ENCODE measurements at regions of chr9 and their contacts with region 1.

Region 1: DNA sequence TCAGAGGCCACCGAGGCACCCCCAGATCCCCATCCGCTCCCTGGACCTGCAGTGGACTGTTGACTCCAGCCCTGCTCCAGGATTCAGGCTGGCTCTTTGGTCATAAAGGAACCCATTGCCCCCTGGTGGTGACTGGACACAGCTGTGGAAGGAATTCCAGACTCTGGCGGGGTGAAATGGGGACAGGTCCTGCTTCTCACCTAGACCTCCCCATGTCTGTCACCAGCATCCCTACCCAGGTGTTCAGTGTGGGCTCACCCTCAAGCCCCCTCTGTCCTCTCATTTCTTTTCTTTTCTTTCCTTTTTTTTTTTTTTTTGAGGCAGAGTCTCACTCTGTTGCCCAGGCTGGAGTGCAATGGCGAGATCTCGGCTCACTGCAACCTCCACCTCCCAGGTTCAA is 25.5 kb upstream of the STXBP1 start:
- DNase-seq: peak; percentile 93
- H3K4me3 ChIP-seq: no peak overlapping the region
- H3K27ac ChIP-seq: no peak overlapping the region
- H3K4me1 ChIP-seq: peaks cover 0 to 35% (median 26%) of the 10 kb centered on the region in 4 donors
- H3K27me3 ChIP-seq: no peaks in the 10 kb centered on the region
- CTCF ChIP-seq: peak; percentile 87 to 95 (median 93)
- EP300 ChIP-seq: no peak
- POLR2A ChIP-seq: no peak

Region 2: DNA sequence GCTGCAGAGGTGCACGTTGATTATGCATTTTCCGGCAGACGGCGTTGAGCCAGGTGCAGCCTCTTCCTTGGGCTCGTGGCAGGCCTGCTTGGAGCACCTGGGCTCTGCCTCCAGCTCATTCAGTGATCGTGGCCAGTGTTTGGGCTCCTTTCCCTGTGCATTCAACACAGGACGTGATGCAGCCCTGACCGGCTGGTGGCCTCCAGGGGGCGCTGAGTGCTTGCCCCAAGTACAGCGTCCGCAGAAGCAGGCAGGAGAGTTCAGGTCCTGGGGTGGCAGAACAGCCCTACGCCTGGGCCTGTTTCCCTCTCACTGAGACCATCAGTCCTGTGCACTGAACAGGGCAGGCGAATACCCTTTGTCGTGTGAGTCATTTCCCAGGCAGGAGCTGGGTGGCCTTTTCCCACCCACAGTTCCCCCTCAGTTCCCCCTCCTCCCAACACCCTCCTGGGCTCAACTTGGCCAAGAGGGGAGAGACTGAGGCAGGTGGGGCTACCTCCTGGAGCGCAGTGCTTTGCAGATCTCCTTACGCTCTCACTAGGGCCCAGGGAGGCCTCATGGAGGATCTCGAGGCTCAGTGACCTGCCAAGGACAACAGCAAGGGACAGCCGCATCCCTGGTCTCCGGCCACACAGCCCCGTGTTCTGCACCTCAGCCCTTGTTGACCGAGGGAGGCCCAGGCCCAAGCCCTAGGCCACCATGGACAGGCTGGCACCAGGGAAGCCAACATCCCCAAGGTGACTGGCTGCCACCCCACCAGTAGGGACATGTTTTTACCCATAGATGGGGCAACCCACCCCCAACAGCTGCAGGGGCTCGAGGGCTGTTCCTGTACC is 82.4 kb before region 1 on chr9:
- intact Hi-C with region 1: loop called (anchors 1 kb)
- DNase-seq: peak; percentile 94
- H3K4me3 ChIP-seq: no peak overlapping the region
- H3K27ac ChIP-seq: peak overlapping the region in 3 of 4 donors; percentile 27 to 45 (median 31)
- H3K4me1 ChIP-seq: peaks cover 5 to 10% (median 6%) of the 10 kb centered on the region in 4 donors
- H3K27me3 ChIP-seq: no peaks in the 10 kb centered on the region
- CTCF ChIP-seq: peak; percentile 86 to 87 (median 87)
- EP300 ChIP-seq: no peak
- POLR2A ChIP-seq: no peak

Region 3: DNA sequence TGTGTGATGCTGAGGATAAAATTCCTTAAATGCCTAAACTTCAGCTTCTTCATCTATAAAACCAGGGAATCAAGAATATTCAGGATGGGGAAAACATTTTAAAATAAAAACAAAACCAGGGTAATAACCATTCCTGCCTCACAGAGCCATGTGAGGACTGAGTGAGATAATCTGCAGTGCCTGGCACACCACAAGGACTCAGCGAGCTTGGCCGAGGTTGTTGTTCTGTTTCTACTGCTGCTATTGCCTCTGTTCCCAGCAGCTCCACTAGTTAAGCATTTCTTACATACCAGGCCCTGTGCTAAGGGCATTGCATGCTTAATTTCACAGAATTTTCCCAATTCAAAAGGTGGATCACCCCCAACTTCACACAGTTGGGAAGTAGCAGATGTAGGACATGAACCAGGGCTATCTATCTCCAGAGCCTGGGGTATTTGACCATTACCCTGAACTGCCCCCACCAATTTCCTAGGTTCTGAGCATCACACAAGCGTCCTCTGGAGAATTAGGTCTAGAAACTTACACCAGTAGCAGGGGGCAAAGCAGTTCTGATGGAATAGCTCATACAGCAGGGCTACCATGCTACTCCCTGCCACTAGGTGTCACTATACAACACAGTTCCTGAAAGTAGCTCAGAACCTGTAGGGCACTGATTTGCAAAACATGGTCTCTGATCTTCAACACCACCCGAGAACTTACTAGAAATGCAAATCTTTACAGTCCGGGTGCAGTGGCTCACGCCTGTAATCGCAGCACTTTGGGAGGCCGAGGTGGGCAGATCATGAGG is 60.9 kb before region 1 on chr9:
- intact Hi-C with region 1: loop called (anchors 2 kb)
- DNase-seq: no peak
- H3K4me3 ChIP-seq: no peak overlapping the region
- H3K27ac ChIP-seq: no peak overlapping the region
- H3K4me1 ChIP-seq: peaks cover 28 to 61% (median 59%) of the 10 kb centered on the region in 4 donors
- H3K27me3 ChIP-seq: no peaks in the 10 kb centered on the region
- CTCF ChIP-seq: peak; percentile 32 to 64 (median 59)
- EP300 ChIP-seq: no peak
- POLR2A ChIP-seq: no peak

Region 4: GRCh38 chr9:127664667-127665507 is 78.3 kb after region 1 on chr9:
- intact Hi-C with region 1: no loop called
- DNase-seq: no peak
- H3K4me3 ChIP-seq: no peak overlapping the region
- H3K27ac ChIP-seq: peak overlapping the region in 2 of 4 donors; percentile 2 to 11
- H3K4me1 ChIP-seq: no peaks in the 10 kb centered on the region
- H3K27me3 ChIP-seq: no peaks in the 10 kb centered on the region
- CTCF ChIP-seq: no peak
- EP300 ChIP-seq: no peak
- POLR2A ChIP-seq: no peak

Measured in esophagus muscularis mucosa (tissue), 4 donors.